ENCODE measurements at regions of chr1 and their contacts with region 1.

Region 1: GRCh38 chr1:41416552-41417334 is 55.5 kb downstream of the FOXO6 start:
- DNase-seq: peak; percentile 61
- ATAC-seq: peak; percentile 85
- H3K4me3 ChIP-seq: no peak overlapping the region
- H3K27ac ChIP-seq: no peak overlapping the region
- H3K4me1 ChIP-seq: peaks cover 29% of the 10 kb centered on the region
- H3K27me3 ChIP-seq: no peaks in the 10 kb centered on the region
- CTCF ChIP-seq: peak; percentile 94

Region 2: DNA sequence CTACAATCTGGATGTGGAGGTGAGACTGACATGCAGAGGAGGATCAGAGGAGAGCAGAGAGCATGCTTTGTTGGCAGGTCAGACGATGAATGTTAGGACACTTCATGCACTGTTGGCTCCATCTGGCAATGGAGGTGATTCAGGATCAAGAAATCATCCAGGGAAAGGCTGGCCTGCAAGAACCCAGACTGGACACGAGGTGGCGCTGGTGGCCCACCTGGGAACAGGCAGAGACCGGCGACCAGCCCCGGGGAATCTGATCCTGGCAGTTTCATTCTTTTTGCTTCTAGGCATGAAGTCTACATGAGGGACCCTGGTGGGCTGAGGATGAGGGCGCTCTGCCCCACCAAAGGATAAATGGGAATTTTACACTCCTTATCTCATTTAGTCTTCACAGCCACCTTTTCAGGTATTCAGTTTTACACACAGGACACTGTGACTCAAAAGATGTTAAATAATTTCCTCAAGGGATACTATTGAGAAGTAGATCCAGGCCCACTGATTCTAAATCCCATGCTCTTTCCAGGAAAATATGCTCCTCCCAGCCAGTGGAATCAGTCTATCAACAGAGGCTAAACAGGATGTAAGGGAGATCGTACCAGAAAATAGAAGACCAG is 148.5 kb before region 1 on chr1:
- CTCF ChIA-PET with region 1: interaction called, 3 read pairs
- POLR2A ChIA-PET with region 1: no interaction called
- in situ Hi-C with region 1: no loop called
- intact Hi-C with region 1: loop called (anchors 5 kb)
- DNase-seq: peak; percentile 63
- ATAC-seq: peak; percentile 85
- H3K4me3 ChIP-seq: no peak overlapping the region
- H3K27ac ChIP-seq: peak overlapping the region; percentile 44; the same call in 1 of the 2 replicates
- H3K4me1 ChIP-seq: no peaks in the 10 kb centered on the region
- H3K27me3 ChIP-seq: no peaks in the 10 kb centered on the region; the same call in 1 of the 2 replicates
- CTCF ChIP-seq: peak; percentile 99

Region 3: GRCh38 chr1:41282679-41283317 is 133.9 kb before region 1 on chr1:
- CTCF ChIA-PET with region 1: interaction called, 4 read pairs
- POLR2A ChIA-PET with region 1: no interaction called
- in situ Hi-C with region 1: no loop called
- intact Hi-C with region 1: loop called (anchors 5 kb)
- DNase-seq: no peak
- ATAC-seq: peak; percentile 84
- H3K4me3 ChIP-seq: no peak overlapping the region
- H3K27ac ChIP-seq: no peak overlapping the region
- H3K4me1 ChIP-seq: no peaks in the 10 kb centered on the region
- H3K27me3 ChIP-seq: peaks cover 14% of the 10 kb centered on the region
- CTCF ChIP-seq: peak; percentile 95

Region 4: DNA sequence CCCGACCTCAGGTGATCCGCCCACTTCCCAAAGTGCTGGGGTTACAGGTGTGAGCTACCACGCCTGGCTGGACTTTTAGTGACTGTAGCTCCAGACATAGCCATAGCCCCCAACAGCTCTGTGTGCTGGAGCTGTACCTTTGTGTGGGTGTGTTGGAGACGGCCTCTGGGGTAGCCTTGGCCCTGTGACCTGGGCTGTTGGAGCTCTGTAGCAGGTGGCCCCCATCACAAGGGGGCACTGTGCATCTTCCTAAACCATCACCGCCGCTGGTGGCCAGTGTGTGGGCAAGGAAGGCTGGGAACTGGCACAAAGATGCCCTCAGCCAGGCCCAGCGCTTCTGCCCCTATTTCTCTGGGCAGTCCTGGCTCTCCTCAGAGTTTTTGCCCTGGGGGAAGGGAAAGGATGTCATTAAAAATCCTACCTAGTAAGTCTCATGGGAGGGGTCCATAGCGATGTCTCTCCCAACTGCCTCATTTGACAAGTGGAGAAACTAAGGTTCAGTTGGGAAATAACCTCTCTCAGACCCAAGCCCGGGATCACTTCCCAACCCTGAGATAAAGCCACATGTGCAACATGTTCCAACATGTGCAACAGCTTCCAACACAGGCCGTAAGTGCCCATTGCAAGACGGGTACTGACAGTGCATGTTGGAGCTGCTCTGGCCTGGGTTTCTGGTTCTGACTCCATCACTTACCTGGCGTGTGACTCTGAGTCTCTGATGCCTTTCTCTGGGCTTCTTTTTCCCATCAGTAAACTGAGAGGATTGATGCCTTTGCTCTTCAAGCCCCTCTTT is 93.7 kb before region 1 on chr1:
- CTCF ChIA-PET with region 1: interaction called, 10 read pairs
- POLR2A ChIA-PET with region 1: no interaction called
- in situ Hi-C with region 1: no loop called
- intact Hi-C with region 1: loop called (anchors 2 kb)
- DNase-seq: peak; percentile 33
- ATAC-seq: peak; percentile 98
- H3K4me3 ChIP-seq: no peak overlapping the region
- H3K27ac ChIP-seq: no peak overlapping the region
- H3K4me1 ChIP-seq: no peaks in the 10 kb centered on the region
- H3K27me3 ChIP-seq: no peaks in the 10 kb centered on the region
- CTCF ChIP-seq: peak; percentile 84

Measured in Panc1 (cell line).